Colonic mucosa (tissue), 4 donors: ENCODE measurements at regions of chr3 and their contacts with region 1.

Region 1: GRCh38 chr3:51718547-51719409 is 11.9 kb downstream of the GRM2 start:
- DNase-seq: peak; percentile 78
- H3K4me3 ChIP-seq: no peak overlapping the region
- H3K27ac ChIP-seq: no peak overlapping the region
- H3K4me1 ChIP-seq: no peaks in the 10 kb centered on the region
- H3K27me3 ChIP-seq: no peaks in the 10 kb centered on the region
- CTCF ChIP-seq: peak; percentile 67

Region 2: GRCh38 chr3:51799879-51800749 is 81.3 kb after region 1 on chr3:
- intact Hi-C with region 1: loop called (anchors 2 kb)
- DNase-seq: peak; percentile 42
- H3K4me3 ChIP-seq: no peak overlapping the region
- H3K27ac ChIP-seq: no peak overlapping the region
- H3K4me1 ChIP-seq: no peaks in the 10 kb centered on the region
- H3K27me3 ChIP-seq: no peaks in the 10 kb centered on the region
- CTCF ChIP-seq: peak; percentile 77

Region 3: GRCh38 chr3:51819709-51820406 is 101.1 kb after region 1 on chr3:
- intact Hi-C with region 1: no loop called
- DNase-seq: no peak
- H3K4me3 ChIP-seq: no peak overlapping the region
- H3K27ac ChIP-seq: no peak overlapping the region
- H3K4me1 ChIP-seq: no peaks in the 10 kb centered on the region
- H3K27me3 ChIP-seq: no peaks in the 10 kb centered on the region
- CTCF ChIP-seq: peak; percentile 20